ENCODE measurements at regions of chr18 and their contacts with region 1.

Region 1: DNA sequence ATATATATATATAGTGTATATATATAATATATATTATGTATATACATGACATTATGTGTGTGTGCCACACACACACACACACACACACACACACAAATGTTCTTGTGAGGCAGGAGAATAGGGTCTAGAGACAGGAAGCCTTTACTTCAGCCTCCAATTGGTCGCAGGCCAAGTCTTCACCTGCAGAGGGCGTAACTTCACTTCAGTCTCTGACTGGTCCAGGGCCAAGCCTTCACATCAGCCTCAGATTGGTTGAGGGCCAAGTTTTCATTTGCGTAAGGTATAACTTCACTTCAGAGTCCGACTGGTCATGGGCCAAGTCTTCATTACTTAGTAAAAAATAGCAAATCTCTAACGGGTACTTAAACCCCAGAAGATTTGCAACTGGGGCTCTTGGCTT is 13.2 kb upstream of the SS18 start:
- DNase-seq: peak; percentile 66
- H3K4me3 Mint-ChIP-seq: no peak overlapping the region
- H3K27ac Mint-ChIP-seq: no peak overlapping the region
- H3K4me1 Mint-ChIP-seq: no peaks in the 10 kb centered on the region
- H3K27me3 Mint-ChIP-seq: no peaks in the 10 kb centered on the region

Region 2: DNA sequence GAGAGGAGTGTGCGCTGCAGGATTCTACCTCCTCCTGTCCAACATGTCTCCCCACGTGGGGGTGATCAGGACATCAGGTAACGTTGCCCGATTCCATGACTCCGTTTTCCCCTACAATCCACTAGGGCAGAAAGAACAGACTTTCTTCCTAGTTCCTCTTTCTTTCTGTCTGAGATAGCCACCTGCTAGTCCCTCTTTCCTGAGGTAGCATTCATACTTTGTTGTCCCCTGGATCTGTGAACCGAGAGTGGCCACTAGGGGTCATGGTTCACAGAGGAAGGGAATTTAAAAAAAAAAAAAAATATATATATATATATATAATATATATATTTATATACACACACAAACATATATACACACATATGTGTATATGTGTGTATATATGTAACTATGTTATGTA is 541.7 kb before region 1 on chr18:
- CTCF ChIA-PET with region 1: no interaction called
- POLR2A ChIA-PET with region 1: no interaction called
- intact Hi-C with region 1: no loop called
- DNase-seq: no peak
- H3K4me3 Mint-ChIP-seq: no peak overlapping the region
- H3K27ac Mint-ChIP-seq: no peak overlapping the region
- H3K4me1 Mint-ChIP-seq: no peaks in the 10 kb centered on the region
- H3K27me3 Mint-ChIP-seq: no peaks in the 10 kb centered on the region

Region 3: DNA sequence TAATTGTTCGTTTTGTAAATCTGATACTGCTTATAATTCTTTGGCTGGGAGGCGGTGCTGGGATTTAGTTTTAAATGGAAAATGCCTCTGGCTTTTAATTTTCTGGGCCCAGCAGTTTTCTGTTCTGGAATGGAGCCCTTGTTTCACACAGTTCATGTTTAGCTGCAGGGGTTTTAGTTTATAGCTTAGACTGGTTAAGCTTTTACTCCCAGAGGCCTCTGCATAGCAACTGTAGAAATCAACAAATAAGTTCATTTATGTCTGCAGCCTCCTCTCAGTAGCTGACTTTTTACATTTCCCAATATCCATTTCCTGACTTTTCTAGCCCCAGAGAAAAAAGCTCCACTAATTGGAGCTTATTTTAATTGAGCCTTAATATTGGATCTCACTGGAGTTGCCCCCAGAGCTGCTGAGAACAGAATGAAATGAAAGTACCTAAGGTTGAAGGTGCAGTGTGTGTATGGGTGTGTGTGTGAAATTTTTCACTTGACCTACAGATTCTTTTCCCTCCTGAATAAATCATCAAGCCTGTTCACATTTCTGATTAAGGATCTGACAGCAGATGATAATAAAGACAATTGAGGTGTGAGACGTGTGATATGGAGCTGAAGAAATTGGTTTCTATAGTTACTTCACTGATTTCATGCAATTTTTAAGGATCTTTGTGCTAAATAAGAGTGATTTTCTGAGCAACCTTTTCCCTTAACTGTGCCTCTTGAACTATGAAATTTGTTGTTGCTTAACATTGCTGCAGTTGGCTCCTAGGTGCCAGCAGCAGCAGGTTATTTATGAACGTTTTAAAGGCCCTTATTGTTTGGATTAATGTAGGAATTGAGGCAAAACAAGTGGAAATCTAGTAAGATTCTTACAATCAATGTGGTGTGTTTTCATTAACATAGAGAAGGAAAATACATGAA is 232.2 kb after region 1 on chr18:
- CTCF ChIA-PET with region 1: no interaction called
- POLR2A ChIA-PET with region 1: no interaction called
- intact Hi-C with region 1: loop called (anchors 10 kb)
- DNase-seq: no peak
- H3K4me3 Mint-ChIP-seq: no peak overlapping the region
- H3K27ac Mint-ChIP-seq: no peak overlapping the region
- H3K4me1 Mint-ChIP-seq: no peaks in the 10 kb centered on the region
- H3K27me3 Mint-ChIP-seq: no peaks in the 10 kb centered on the region

Measured in activated CD4-positive, alpha-beta memory T cell treated with anti-CD3 and anti-CD28 coated beads for 36 hours (primary cell).